ENCODE measurements at regions of chr5 and their contacts with region 1.

Region 1: DNA sequence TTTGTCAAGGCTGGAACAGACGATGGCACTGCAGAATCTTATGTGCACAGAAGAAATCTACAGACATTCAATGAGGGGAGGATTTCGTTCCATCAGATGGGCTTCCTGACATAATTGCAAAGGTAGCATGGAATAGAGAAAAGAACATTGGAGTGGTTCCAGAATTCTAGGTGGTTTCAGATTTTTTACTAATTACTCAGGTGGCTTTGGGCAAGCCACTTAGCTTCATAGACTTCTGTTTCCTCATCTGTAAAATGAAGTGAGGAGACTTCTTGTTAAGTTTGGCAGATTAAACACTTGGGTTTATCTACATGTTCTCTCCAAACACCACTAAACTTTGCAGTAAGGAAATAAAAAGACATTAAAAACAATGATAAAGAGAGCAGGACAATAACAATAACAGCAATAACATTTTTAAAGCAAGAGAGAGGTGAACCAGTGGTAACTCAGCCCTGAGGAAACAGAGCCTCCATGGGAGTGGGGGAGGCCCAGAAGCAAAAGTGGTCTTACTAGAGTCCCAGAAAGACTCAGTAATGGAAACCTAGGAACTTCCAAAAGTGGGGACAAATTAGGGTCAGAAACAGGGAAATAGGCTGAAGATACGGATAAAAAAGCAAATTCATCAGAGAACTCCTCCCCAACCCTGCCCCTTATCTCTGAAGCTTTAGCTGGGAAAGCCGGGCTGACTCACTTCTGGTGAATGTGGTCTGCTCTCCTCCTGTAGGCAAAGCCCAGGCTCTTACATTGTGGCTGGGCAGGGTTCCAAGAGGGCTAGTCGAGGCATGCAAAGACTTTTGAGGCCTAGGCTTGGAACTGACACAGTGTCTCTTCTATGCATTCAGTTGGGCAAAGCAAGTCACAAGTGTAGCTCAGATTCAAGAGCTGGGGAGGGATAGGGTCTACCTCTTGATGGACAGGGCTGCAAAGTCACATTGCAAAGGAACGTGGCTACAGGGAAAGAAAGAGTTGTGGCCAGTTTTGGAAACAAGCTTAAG is 11.8 kb upstream of the ACTBL2 start:
- DNase-seq: peak; percentile 42 to 67
- H3K4me3 ChIP-seq: no peak overlapping the region
- H3K4me3 Mint-ChIP-seq: no peak overlapping the region
- H3K27ac Mint-ChIP-seq: peak overlapping the region; percentile 25
- H3K4me1 ChIP-seq: peaks cover 10% of the 10 kb centered on the region
- H3K4me1 Mint-ChIP-seq: peaks cover 20% of the 10 kb centered on the region
- H3K27me3 ChIP-seq: no peaks in the 10 kb centered on the region
- H3K27me3 Mint-ChIP-seq: no peaks in the 10 kb centered on the region
- CTCF ChIP-seq: no peak

Region 2: GRCh38 chr5:57311921-57312735 is 182.3 kb before region 1 on chr5:
- CTCF ChIA-PET with region 1: no interaction called
- POLR2A ChIA-PET with region 1: no interaction called
- intact Hi-C with region 1: loop called (anchors 5 kb)
- DNase-seq: peak in 1 of 2 experiments; percentile 3
- H3K4me3 ChIP-seq: no peak overlapping the region
- H3K4me3 Mint-ChIP-seq: no peak overlapping the region
- H3K27ac Mint-ChIP-seq: peak overlapping the region; percentile 23
- H3K4me1 ChIP-seq: peaks cover 11% of the 10 kb centered on the region; the same call in 1 of the 2 replicates
- H3K4me1 Mint-ChIP-seq: peaks cover 15% of the 10 kb centered on the region
- H3K27me3 ChIP-seq: no peaks in the 10 kb centered on the region
- H3K27me3 Mint-ChIP-seq: no peaks in the 10 kb centered on the region
- CTCF ChIP-seq: no peak

Region 3: GRCh38 chr5:57442080-57442839 is 52.1 kb before region 1 on chr5:
- CTCF ChIA-PET with region 1: no interaction called
- POLR2A ChIA-PET with region 1: no interaction called
- intact Hi-C with region 1: no loop called
- DNase-seq: no peak
- H3K4me3 ChIP-seq: no peak overlapping the region
- H3K4me3 Mint-ChIP-seq: no peak overlapping the region
- H3K27ac Mint-ChIP-seq: no peak overlapping the region
- H3K4me1 ChIP-seq: peaks cover 21% of the 10 kb centered on the region
- H3K4me1 Mint-ChIP-seq: peaks cover 8% of the 10 kb centered on the region
- H3K27me3 ChIP-seq: no peaks in the 10 kb centered on the region
- H3K27me3 Mint-ChIP-seq: no peaks in the 10 kb centered on the region
- CTCF ChIP-seq: no peak